Dendritic cell treated with granulocyte-macrophage colony-stimulating factor and Interleukin-4, amounts not matched to agents 40 ng/mL and 50 ng/mL, for 4 days (primary cell): ENCODE measurements at regions of chr9 and their contacts with region 1.

Region 1: DNA sequence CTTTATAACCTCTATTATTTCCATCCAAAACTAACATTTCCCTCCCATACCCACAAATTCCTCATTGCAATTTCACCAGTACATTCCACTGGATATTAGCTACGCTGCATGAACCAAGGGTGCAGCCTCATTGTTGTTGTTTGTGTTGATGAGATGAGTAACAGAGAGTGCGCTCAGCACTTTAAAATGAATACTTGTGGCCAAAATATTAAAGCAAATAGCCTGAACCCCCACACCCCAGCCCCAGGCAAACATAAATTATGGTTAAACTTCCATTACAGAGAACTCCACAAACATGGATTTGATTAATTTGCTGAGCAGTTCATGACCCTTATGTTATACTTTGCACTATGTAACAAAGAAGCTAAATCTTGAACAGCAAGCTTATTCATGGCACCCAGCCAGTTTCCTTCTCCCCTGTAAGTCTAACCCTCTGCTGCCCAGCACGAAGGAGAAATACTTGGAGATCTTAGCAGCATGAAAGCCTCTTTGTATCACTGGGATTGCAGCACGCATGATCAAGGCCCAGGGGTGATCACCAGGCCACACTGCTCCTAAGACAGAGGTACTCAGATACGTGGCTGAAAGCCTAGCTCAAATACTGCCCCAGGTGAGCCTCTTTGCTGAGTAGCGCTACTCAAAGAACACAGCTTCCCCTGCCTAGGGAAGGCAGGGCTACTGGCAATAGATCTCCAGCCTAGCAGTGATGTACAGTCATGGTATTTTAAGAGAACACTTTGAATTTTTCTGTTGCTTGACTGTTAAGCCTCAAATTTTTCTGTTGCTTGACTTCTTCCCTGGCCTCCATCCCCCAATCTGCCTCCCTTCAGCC is 205.1 kb downstream of the DOCK8 start:
- H3K4me3 Mint-ChIP-seq: no peak overlapping the region
- H3K27ac Mint-ChIP-seq: no peak overlapping the region
- H3K4me1 Mint-ChIP-seq: no peaks in the 10 kb centered on the region
- H3K27me3 Mint-ChIP-seq: no peaks in the 10 kb centered on the region

Region 2: GRCh38 chr9:336039-336438 is 83.7 kb before region 1 on chr9:
- intact Hi-C with region 1: loop called (anchors 10 kb)
- H3K4me3 Mint-ChIP-seq: no peak overlapping the region
- H3K27ac Mint-ChIP-seq: no peak overlapping the region
- H3K4me1 Mint-ChIP-seq: no peaks in the 10 kb centered on the region
- H3K27me3 Mint-ChIP-seq: no peaks in the 10 kb centered on the region

Region 3: DNA sequence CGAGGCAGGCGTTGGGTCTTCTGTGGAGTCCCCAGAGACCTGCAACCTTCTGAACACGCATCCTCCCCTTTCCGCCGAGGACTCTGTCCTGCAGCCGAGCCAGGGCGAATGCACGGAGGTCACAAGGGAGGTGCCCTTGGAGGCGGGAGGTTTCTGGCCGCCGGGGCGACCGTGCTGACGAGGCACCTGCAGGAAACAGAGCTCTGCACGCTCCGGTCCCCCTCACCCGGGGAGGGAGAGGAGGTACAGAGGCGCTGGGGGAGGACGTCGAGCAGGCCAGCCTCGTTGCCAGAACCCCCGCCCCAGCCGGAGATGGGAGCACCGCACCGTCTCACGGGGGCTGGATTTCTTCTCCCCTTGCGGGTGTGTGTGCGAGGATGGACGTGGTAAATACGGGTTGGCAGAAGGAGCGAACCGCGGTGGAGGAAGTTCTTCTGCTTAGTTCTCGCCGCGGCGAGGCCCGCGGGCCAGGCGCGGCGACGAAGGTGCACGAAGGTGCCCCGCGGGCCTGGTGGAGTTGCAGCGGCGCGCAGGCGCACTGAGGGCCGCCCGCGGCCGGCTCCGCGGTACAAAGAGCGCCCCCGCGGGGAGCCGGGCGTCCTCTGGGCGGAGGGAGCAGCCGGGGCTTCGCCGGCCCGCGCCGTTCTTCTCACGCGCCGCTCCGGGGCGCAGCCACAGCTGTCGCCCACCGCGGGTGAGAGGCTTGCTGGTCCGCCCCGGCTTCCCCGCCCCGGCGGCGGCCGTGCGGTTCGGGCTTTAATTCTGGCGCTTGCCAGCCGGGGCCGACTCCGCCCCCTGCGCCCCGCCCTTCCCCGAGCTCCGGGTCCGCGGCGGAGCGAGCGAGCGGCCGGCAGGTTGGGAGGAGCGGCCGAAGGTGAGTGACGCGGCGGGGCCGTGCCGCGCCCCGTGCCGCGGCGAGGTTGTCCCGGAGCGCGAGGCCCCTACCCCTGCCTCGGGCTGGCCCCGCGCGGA is 84.4 kb after region 1 on chr9:
- intact Hi-C with region 1: no loop called
- H3K4me3 Mint-ChIP-seq: peak within 1 kb of the TSS; percentile 79
- H3K27ac Mint-ChIP-seq: no peak within 1 kb of the TSS
- H3K4me1 Mint-ChIP-seq: peaks cover 23% of the 10 kb centered on the region
- H3K27me3 Mint-ChIP-seq: peaks cover 79% of the 10 kb centered on the region